MCF 10A (cell line): ENCODE measurements at regions of chr20 and their contacts with region 1.

Region 1: GRCh38 chr20:38764567-38765355 is 16.5 kb downstream of the ACTR5 start:
- DNase-seq: peak; percentile 87
- H3K4me3 Mint-ChIP-seq: no peak overlapping the region
- H3K27ac Mint-ChIP-seq: no peak overlapping the region
- H3K4me1 Mint-ChIP-seq: peaks cover 16% of the 10 kb centered on the region
- H3K27me3 Mint-ChIP-seq: no peaks in the 10 kb centered on the region
- CTCF ChIP-seq: no peak

Region 2: DNA sequence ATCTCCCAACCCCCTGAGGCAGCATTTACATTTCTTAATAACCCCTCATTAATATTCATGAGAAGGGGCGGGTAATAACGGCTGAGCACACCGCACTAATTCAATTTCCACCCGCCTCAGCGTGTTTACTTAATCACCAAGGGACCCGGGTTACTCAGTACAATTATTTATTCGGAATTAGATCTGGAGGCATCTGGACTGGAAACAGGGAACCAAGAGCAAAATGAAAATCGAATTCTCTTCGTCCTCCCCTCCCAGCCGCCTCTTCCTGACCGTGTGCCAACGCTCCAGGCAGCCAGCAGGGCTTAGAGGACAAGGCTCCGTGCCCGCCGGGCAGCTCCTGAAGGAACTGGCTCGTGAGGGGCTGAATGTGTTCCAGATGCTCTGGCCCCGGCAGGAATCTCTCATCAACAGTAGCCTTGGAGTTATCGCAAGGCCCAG is 1094.4 kb before region 1 on chr20:
- CTCF ChIA-PET with region 1: no interaction called
- POLR2A ChIA-PET with region 1: no interaction called
- intact Hi-C with region 1: no loop called
- DNase-seq: no peak
- H3K4me3 Mint-ChIP-seq: no peak overlapping the region
- H3K27ac Mint-ChIP-seq: no peak overlapping the region
- H3K4me1 Mint-ChIP-seq: peaks cover 6% of the 10 kb centered on the region
- H3K27me3 Mint-ChIP-seq: peaks cover 66% of the 10 kb centered on the region
- CTCF ChIP-seq: no peak

Region 3: DNA sequence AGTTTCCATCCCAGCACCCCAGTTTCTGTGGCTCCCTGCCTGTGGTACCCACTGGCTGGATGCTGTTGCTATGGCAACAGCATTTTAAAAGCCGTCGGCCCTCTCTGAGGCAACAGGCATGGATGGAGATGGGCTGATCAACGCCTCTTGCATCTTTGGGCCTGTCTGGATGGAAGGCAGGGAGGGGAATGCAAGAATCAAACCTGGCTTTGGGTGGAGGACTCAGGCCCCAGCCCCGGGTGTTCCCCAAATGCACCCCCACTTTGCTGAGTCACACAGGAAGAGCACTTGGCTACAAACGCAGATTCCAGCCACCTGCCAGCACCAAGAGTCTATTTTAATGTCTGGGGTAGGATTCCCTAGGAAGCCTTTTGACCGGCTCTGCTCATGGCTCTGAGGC is 554.0 kb before region 1 on chr20:
- CTCF ChIA-PET with region 1: no interaction called
- POLR2A ChIA-PET with region 1: no interaction called
- intact Hi-C with region 1: no loop called
- DNase-seq: peak; percentile 57
- H3K4me3 Mint-ChIP-seq: no peak overlapping the region
- H3K27ac Mint-ChIP-seq: no peak overlapping the region
- H3K4me1 Mint-ChIP-seq: no peaks in the 10 kb centered on the region
- H3K27me3 Mint-ChIP-seq: no peaks in the 10 kb centered on the region
- CTCF ChIP-seq: no peak

Region 4: GRCh38 chr20:38779247-38780097 is 14.7 kb after region 1 on chr20:
- CTCF ChIA-PET with region 1: interaction called, 4 read pairs
- POLR2A ChIA-PET with region 1: interaction called, 11 read pairs
- intact Hi-C with region 1: no loop called
- DNase-seq: peak; percentile 34
- H3K4me3 Mint-ChIP-seq: no peak overlapping the region
- H3K27ac Mint-ChIP-seq: no peak overlapping the region
- H3K4me1 Mint-ChIP-seq: no peaks in the 10 kb centered on the region
- H3K27me3 Mint-ChIP-seq: no peaks in the 10 kb centered on the region
- CTCF ChIP-seq: no peak

Region 5: DNA sequence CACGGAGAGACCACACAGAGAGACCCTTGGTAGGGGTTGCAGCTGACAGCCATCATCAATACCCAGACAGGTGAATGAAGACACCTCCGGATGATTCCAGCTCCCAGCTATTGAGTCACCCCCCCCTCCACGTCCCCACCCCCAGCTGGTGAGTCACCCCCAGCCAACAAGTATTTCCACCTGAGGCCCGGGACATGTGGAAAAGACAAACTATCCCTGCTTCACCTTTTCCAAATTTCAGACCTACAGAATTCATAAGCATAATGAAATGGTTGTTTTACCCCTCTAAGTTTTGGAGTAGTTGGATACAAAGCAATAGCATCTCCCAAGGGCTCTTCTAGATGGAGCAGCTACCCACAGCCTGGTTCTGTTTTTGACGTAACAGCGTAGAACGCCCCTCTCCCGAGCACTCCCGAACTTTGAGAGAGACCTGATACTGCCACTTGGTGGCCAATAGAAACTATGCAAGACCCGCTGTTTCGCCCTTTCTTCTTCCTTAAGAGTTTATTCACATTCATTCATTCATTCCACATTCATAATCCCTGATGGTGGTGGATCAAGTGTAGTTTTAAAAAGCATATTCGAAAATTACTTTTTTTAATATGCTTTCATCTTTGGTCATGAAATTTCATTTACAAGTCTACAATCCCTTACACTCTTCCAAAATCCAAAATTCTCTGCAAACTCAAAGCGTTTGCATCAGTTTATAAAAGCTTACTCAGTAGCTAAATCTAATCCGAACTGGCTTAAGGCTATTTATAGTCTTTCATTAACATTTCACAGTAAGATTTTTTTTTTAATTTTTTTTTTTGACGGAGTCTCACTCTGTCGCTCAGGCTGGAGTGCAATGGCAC is 25.7 kb after region 1 on chr20:
- CTCF ChIA-PET with region 1: interaction called, 11 read pairs
- POLR2A ChIA-PET with region 1: interaction called, 4 read pairs
- intact Hi-C with region 1: no loop called
- DNase-seq: peak; percentile 47
- H3K4me3 Mint-ChIP-seq: no peak overlapping the region
- H3K27ac Mint-ChIP-seq: peak overlapping the region; percentile 76
- H3K4me1 Mint-ChIP-seq: peaks cover 6% of the 10 kb centered on the region
- H3K27me3 Mint-ChIP-seq: no peaks in the 10 kb centered on the region
- CTCF ChIP-seq: no peak